Heart left ventricle (tissue), 16 donors: ENCODE measurements at regions of chr3 and their contacts with region 1.

Region 1: GRCh38 chr3:154120961-154121700 is at the start of gene ARHGEF26:
- DNase-seq: peak; percentile 71 to 91 (median 85)
- ATAC-seq: peak; percentile 82 to 95 (median 94)
- H3K4me3 ChIP-seq: peak within 1 kb of the TSS; percentile 52 to 90 (median 76)
- H3K27ac ChIP-seq: peak within 1 kb of the TSS in 9 of 12 donors; percentile 35 to 86 (median 54)
- H3K4me1 ChIP-seq: peaks cover 0 to 25% (median 5%) of the 10 kb centered on the region in 12 donors
- H3K27me3 ChIP-seq: peaks cover 0 to 39% (median 6%) of the 10 kb centered on the region in 9 donors
- CTCF ChIP-seq: no peak
- POLR2A ChIP-seq: no peak
- total RNA-seq, gene ARHGEF26: 0.68 to 2.3 (median 1.3) TPM

Region 2: DNA sequence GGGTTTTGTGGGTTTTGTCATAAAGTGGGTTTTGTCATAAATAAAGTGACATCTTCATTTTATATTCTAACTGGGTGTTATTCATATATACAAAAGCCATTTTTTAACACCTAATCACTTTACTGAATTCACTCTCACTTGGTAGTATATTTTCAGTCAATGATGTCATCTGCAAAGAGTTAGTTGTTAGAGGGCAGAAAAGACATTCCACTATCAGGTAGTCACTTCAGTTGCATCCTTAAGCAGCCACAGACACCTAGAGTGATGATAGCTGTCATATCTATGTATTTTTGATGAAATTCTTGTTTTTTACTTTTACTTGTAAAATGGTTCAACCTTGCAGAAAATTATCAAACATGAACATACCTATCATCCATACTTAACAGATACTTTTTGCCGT is 114.2 kb after region 1 on chr3:
- intact Hi-C with region 1: loop called in 1 of 10 experiments (anchors 10 kb)
- DNase-seq: no peak
- ATAC-seq: no peak
- H3K4me3 ChIP-seq: no peak overlapping the region
- H3K27ac ChIP-seq: no peak overlapping the region
- H3K4me1 ChIP-seq: peaks cover 0 to 6% (median 0%) of the 10 kb centered on the region in 12 donors
- H3K27me3 ChIP-seq: no peaks in the 10 kb centered on the region
- CTCF ChIP-seq: no peak
- POLR2A ChIP-seq: no peak

Region 3: GRCh38 chr3:154486949-154487348 is 365.8 kb after region 1 on chr3:
- intact Hi-C with region 1: no loop called
- DNase-seq: peak in 1 of 5 donors; percentile 23
- ATAC-seq: no peak
- H3K4me3 ChIP-seq: no peak overlapping the region
- H3K27ac ChIP-seq: no peak overlapping the region
- H3K4me1 ChIP-seq: no peaks in the 10 kb centered on the region
- H3K27me3 ChIP-seq: peaks cover 0 to 11% (median 0%) of the 10 kb centered on the region in 9 donors
- CTCF ChIP-seq: no peak
- POLR2A ChIP-seq: no peak